Left lung (tissue), 14 donors: ENCODE measurements at regions of chr17 and their contacts with region 1.

Region 1: GRCh38 chr17:55536205-55536604 is 25.0 kb upstream of the SMIM36 start:
- DNase-seq: no peak
- ATAC-seq: no peak
- H3K4me3 ChIP-seq: no peak overlapping the region
- H3K27ac ChIP-seq: no peak overlapping the region
- H3K4me1 ChIP-seq: no peaks in the 10 kb centered on the region
- H3K27me3 ChIP-seq: no peaks in the 10 kb centered on the region
- CTCF ChIP-seq: no peak

Region 2: GRCh38 chr17:55587608-55588139 is 51.5 kb after region 1 on chr17:
- intact Hi-C with region 1: loop called in 1 of 2 experiments (anchors 5 kb)
- DNase-seq: peak in 2 of 4 donors; percentile 46 to 76
- ATAC-seq: peak; percentile 42
- H3K4me3 ChIP-seq: no peak overlapping the region
- H3K27ac ChIP-seq: peak overlapping the region; percentile 34 to 50
- H3K4me1 ChIP-seq: peaks cover 4 to 41% of the 10 kb centered on the region in 2 donors
- H3K27me3 ChIP-seq: no peaks in the 10 kb centered on the region
- CTCF ChIP-seq: no peak